Caco-2 (cell line): ENCODE measurements at regions of chr6 and their contacts with region 1.

Region 1: DNA sequence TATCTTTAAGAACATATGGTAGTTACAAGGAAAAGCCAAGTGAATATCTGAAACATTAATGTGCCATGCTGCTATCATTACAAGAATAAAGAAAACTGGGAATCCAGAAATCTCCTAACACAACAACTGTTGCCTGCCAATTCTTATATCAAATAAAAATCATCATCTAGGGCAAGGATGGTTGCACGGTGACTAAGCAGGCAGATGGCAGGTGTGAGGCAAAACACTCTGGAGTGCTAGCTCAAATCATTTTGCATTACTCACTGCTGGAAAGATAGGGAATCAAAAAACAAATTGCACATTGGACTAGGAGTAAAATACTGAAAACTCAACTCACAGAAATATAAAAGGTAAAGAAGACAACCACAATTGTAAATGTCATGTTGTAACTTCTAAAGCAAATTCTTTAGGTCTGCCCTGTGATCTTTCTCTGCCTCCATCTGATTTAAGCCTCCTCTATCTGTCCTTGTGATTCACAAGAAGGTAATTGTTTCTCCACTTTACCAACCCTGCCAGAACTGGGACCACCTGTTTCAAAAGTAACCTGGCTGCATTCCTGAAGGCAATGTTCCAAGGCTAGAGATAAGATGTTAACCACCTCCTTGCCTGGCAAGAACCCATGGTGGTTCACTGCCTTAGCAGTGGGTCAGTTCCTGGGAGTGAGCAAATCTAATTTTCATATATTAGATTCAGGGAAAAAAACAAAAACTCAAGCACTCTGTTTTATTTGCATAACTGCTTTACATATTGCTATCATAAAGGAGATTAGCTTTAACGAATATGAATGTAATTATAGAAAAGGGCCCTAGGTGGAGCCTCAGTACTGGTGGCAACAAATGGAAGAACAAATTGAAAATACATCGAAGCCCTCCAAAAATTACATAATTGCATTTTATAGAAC is 33.1 kb upstream of the LCA5 start:
- DNase-seq: peak; percentile 93 to 94
- H3K4me3 ChIP-seq: peak overlapping the region; percentile 16; the same call in 1 of the 2 replicates
- H3K4me3 Mint-ChIP-seq: peak overlapping the region; percentile 46
- H3K27ac Mint-ChIP-seq: peak overlapping the region; percentile 88
- H3K4me1 ChIP-seq: peaks cover 69% of the 10 kb centered on the region
- H3K4me1 Mint-ChIP-seq: peaks cover 42% of the 10 kb centered on the region
- H3K27me3 ChIP-seq: no peaks in the 10 kb centered on the region
- H3K27me3 Mint-ChIP-seq: no peaks in the 10 kb centered on the region
- CTCF ChIP-seq: peak; percentile 42 to 75

Region 2: DNA sequence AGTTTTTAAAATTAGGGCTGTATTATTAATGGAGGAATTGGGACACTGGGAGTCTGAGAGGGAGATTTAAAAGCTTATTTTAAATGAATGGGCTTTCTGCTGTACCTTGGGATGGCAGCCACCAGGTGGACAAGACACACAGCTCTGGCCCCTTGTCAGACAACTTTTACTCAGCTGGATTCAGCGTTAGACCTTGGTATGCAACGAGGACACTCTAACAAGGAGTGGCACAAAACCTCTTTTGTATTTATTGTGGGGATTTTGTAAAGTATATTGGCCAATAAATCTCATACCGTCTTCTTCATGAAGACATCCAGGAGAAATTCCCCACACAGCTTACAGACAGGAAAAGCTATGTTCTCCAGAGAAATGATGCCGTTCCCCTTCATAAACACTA is 138.8 kb before region 1 on chr6:
- CTCF ChIA-PET with region 1: interaction called, 3 read pairs
- POLR2A ChIA-PET with region 1: no interaction called
- intact Hi-C with region 1: loop called (anchors 1 kb)
- DNase-seq: peak; percentile 61 to 69
- H3K4me3 ChIP-seq: no peak overlapping the region
- H3K4me3 Mint-ChIP-seq: peak overlapping the region; percentile 10
- H3K27ac Mint-ChIP-seq: peak overlapping the region; percentile 41
- H3K4me1 ChIP-seq: peaks cover 37% of the 10 kb centered on the region
- H3K4me1 Mint-ChIP-seq: peaks cover 24% of the 10 kb centered on the region
- H3K27me3 ChIP-seq: no peaks in the 10 kb centered on the region
- H3K27me3 Mint-ChIP-seq: no peaks in the 10 kb centered on the region
- CTCF ChIP-seq: peak; percentile 62 to 67

Region 3: GRCh38 chr6:79536954-79537747 is 33.2 kb before region 1 on chr6 and contains the start of gene LCA5:
- CTCF ChIA-PET with region 1: no interaction called
- POLR2A ChIA-PET with region 1: no interaction called
- intact Hi-C with region 1: loop called (anchors 1 kb)
- DNase-seq: peak; percentile 94 to 97
- H3K4me3 ChIP-seq: peak within 1 kb of the TSS; percentile 75
- H3K4me3 Mint-ChIP-seq: no peak within 1 kb of the TSS
- H3K27ac Mint-ChIP-seq: no peak within 1 kb of the TSS
- H3K4me1 ChIP-seq: peaks cover 36% of the 10 kb centered on the region
- H3K4me1 Mint-ChIP-seq: peaks cover 17% of the 10 kb centered on the region
- H3K27me3 ChIP-seq: no peaks in the 10 kb centered on the region
- H3K27me3 Mint-ChIP-seq: no peaks in the 10 kb centered on the region
- CTCF ChIP-seq: no peak
- total RNA-seq, gene LCA5: 10.9 and 12.2 TPM in 2 replicates

Region 4: DNA sequence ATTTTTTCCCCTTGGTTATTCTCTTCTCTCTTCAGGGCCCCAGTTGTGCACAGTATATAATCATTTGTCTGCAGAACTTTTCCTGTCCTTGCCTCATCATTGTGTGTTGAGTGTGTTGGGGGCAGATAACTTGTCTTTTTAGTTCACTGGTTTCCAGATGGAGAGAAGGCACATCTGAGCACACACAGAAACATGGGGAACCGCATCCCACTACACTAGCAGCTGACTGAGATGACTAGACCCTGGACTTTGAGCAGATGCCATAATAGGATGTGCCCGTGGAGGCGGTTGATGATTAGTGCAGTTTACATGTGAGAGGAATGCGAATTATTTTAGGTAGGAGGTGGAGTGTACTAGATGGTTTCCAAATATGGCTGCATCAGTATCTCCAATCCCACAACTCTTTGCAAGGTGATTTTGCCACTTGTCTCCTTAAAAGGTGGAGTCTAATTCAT is 34.2 kb after region 1 on chr6:
- CTCF ChIA-PET with region 1: no interaction called
- POLR2A ChIA-PET with region 1: interaction called, 3 read pairs
- intact Hi-C with region 1: loop called (anchors 1 kb)
- DNase-seq: peak; percentile 82 to 90
- H3K4me3 ChIP-seq: no peak overlapping the region
- H3K4me3 Mint-ChIP-seq: peak overlapping the region; percentile 18
- H3K27ac Mint-ChIP-seq: peak overlapping the region; percentile 80
- H3K4me1 ChIP-seq: peaks cover 96% of the 10 kb centered on the region
- H3K4me1 Mint-ChIP-seq: peaks cover 62% of the 10 kb centered on the region
- H3K27me3 ChIP-seq: no peaks in the 10 kb centered on the region
- H3K27me3 Mint-ChIP-seq: no peaks in the 10 kb centered on the region
- CTCF ChIP-seq: no peak

Region 5: DNA sequence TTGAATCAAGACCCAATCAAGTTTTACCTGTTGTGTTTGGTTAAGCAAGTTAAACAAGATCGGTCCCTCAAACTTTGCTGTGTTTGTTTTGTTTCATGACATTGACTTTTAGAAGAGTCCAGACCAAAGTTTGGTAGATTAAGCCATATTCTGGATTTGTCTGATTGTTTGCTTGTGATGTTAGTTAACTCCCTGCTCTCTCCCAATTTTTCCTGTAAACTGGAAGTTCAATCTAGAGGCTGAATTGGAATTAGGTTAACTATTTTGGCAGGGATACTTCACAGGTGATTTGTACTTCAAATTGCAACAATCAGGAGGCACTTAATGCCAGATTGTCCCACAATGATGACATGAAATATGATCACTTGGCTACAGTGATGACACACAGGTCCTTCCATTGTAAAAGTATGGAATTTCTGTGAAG is 47.2 kb after region 1 on chr6:
- CTCF ChIA-PET with region 1: no interaction called
- POLR2A ChIA-PET with region 1: no interaction called
- intact Hi-C with region 1: no loop called
- DNase-seq: no peak
- H3K4me3 ChIP-seq: no peak overlapping the region
- H3K4me3 Mint-ChIP-seq: no peak overlapping the region
- H3K27ac Mint-ChIP-seq: no peak overlapping the region
- H3K4me1 ChIP-seq: peaks cover 47% of the 10 kb centered on the region
- H3K4me1 Mint-ChIP-seq: peaks cover 44% of the 10 kb centered on the region
- H3K27me3 ChIP-seq: no peaks in the 10 kb centered on the region
- H3K27me3 Mint-ChIP-seq: no peaks in the 10 kb centered on the region
- CTCF ChIP-seq: no peak

Region 6: GRCh38 chr6:79713701-79714322 is 143.4 kb after region 1 on chr6:
- CTCF ChIA-PET with region 1: no interaction called
- POLR2A ChIA-PET with region 1: no interaction called
- intact Hi-C with region 1: loop called (anchors 1 kb)
- DNase-seq: peak; percentile 46 to 67
- H3K4me3 ChIP-seq: no peak overlapping the region
- H3K4me3 Mint-ChIP-seq: no peak overlapping the region
- H3K27ac Mint-ChIP-seq: no peak overlapping the region
- H3K4me1 ChIP-seq: peaks cover 11% of the 10 kb centered on the region
- H3K4me1 Mint-ChIP-seq: peaks cover 24% of the 10 kb centered on the region
- H3K27me3 ChIP-seq: no peaks in the 10 kb centered on the region
- H3K27me3 Mint-ChIP-seq: no peaks in the 10 kb centered on the region
- CTCF ChIP-seq: peak; percentile 72 to 80

Region 7: GRCh38 chr6:79869600-79870084 is 299.3 kb after region 1 on chr6:
- CTCF ChIA-PET with region 1: no interaction called
- POLR2A ChIA-PET with region 1: no interaction called
- intact Hi-C with region 1: loop called (anchors 2 kb)
- DNase-seq: peak; percentile 80 to 88
- H3K4me3 ChIP-seq: 0 out of 2 replicates have a peak overlapping the region, but pooled peaks have one; percentile 4
- H3K4me3 Mint-ChIP-seq: peak overlapping the region; percentile 42
- H3K27ac Mint-ChIP-seq: no peak overlapping the region
- H3K4me1 ChIP-seq: no peaks in the 10 kb centered on the region; the same call in 1 of the 2 replicates
- H3K4me1 Mint-ChIP-seq: peaks cover 25% of the 10 kb centered on the region
- H3K27me3 ChIP-seq: no peaks in the 10 kb centered on the region
- H3K27me3 Mint-ChIP-seq: no peaks in the 10 kb centered on the region
- CTCF ChIP-seq: peak; percentile 86 to 95